ENCODE measurements at regions of chr11 and their contacts with region 1.

Region 1: GRCh38 chr11:39374963-39375698 is 2084.3 kb downstream of the LRRC4C start:
- H3K4me3 ChIP-seq: no peak overlapping the region
- H3K27ac ChIP-seq: no peak overlapping the region
- H3K4me1 ChIP-seq: no peaks in the 10 kb centered on the region
- CTCF ChIP-seq: no peak

Region 2: DNA sequence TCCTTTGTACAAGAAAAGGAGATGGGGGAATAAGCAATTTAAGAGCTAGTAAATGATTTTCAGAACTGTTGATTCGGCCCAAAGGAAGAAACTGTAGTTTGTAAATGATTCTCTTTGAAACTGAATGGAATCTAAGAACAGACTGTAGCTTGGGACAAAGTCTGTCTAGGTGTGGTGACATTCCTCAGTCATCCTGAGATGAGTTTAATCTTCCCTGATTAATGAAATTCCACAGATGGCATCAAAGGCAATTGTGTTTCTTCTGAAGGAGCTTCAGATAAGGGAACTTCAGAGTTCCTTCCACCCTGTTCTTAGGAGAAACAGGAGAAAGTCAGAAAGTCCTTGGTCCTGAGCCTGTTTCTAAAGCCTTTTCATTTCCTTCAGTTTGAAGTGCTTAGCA is 11.5 kb before region 1 on chr11:
- CTCF ChIA-PET with region 1: interaction called, 13 read pairs
- POLR2A ChIA-PET with region 1: no interaction called
- H3K4me3 ChIP-seq: no peak overlapping the region
- H3K27ac ChIP-seq: no peak overlapping the region
- H3K4me1 ChIP-seq: no peaks in the 10 kb centered on the region
- CTCF ChIP-seq: no peak

Measured in HEK293 (cell line).